Natural killer cell (primary cell): ENCODE measurements at regions of chr7 and their contacts with region 1.

Region 1: DNA sequence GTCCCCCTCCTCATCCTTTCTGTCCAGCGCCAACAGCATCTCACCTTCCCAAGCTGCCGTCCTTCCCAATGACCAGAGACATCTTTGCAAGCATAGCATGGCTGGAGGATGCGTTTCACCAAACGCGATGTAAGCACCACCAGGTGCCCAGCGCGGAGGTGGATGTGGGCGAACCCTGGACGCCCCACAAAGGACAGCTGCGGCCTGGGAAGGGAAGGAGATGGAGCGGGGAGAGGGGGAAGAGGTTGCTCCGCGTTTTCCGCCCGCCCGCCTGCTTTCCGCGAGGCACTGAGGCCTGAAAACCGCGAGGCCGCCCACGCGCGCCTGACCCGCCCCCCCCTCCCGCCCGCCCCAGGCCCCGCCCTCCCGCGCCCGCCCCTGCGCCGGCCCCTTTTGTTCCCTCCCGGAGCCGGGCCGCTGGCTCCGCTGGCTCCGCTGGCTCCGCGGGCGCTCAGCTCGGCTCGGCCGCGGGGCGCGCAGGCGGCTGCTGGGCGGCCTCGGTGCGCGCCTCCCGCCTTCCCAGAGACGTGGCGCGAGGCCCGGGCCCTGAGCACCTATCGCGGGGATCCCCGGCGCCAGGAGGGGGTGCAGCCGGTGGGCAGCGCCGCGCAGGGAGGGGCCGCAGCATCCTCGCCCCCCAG is at the start of gene CLIP2:
- DNase-seq: peak; percentile 62 to 86
- ATAC-seq: peak; percentile 80 to 86 (median 81)
- H3K4me3 ChIP-seq: peak within 1 kb of the TSS; percentile 32
- H3K4me3 Mint-ChIP-seq: peak within 1 kb of the TSS; percentile 90
- H3K27ac ChIP-seq: no peak within 1 kb of the TSS
- H3K27ac Mint-ChIP-seq: peak within 1 kb of the TSS; percentile 57 to 85
- H3K4me1 ChIP-seq: peaks cover 51% of the 10 kb centered on the region
- H3K4me1 Mint-ChIP-seq: peaks cover 34 to 44% of the 10 kb centered on the region in 2 donors
- H3K27me3 ChIP-seq: no peaks in the 10 kb centered on the region
- H3K27me3 Mint-ChIP-seq: peaks cover 0 to 3% of the 10 kb centered on the region in 2 donors
- CTCF ChIP-seq: no peak
- total RNA-seq, gene CLIP2: 8.5 to 14.7 (median 10.5) TPM

Region 2: DNA sequence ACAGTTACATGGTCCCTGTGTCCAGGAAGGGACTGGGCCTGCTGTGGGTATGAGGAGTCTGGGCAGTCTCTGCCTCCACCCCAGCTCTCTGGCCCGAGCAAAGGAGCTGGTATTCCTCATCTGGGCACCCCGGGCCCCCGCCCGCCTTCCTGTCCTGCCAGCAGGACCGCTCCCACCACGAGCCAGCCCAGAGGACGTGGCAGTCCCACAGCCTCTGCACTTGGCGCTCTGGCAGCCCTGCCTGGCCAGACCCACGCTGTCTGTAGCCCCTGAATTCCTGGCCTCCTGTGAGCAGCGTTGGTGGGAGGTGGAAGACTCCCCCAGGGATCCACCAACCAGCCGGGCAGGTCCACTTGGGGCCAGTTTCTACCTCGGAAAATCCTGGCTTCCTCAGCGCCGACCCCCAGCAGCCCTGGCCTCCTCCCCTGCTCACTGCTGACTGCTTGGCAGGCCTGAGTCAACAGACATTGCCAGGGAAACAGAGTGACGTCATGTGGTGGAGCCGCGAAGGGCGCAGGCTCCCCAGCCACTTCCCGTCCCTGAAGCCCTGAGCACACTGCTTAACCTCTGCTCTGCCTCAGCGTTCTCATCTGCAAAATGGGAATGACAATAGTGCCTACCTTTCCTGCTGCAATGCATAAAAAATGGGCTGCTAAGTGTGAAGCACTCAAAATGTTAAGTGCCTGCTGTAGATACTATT is 227.1 kb before region 1 on chr7:
- intact Hi-C with region 1: loop called (anchors 10 kb)
- DNase-seq: peak; percentile 84 to 86
- ATAC-seq: peak; percentile 95 to 99 (median 95)
- H3K4me3 ChIP-seq: peak overlapping the region; percentile 21
- H3K4me3 Mint-ChIP-seq: peak overlapping the region; percentile 86
- H3K27ac ChIP-seq: peak overlapping the region; percentile 91
- H3K27ac Mint-ChIP-seq: peak overlapping the region; percentile 99 to 100
- H3K4me1 ChIP-seq: peaks cover 21% of the 10 kb centered on the region
- H3K4me1 Mint-ChIP-seq: peaks cover 8 to 18% of the 10 kb centered on the region in 2 donors
- H3K27me3 ChIP-seq: no peaks in the 10 kb centered on the region
- H3K27me3 Mint-ChIP-seq: peaks cover 0 to 3% of the 10 kb centered on the region in 2 donors
- CTCF ChIP-seq: no peak

Region 3: DNA sequence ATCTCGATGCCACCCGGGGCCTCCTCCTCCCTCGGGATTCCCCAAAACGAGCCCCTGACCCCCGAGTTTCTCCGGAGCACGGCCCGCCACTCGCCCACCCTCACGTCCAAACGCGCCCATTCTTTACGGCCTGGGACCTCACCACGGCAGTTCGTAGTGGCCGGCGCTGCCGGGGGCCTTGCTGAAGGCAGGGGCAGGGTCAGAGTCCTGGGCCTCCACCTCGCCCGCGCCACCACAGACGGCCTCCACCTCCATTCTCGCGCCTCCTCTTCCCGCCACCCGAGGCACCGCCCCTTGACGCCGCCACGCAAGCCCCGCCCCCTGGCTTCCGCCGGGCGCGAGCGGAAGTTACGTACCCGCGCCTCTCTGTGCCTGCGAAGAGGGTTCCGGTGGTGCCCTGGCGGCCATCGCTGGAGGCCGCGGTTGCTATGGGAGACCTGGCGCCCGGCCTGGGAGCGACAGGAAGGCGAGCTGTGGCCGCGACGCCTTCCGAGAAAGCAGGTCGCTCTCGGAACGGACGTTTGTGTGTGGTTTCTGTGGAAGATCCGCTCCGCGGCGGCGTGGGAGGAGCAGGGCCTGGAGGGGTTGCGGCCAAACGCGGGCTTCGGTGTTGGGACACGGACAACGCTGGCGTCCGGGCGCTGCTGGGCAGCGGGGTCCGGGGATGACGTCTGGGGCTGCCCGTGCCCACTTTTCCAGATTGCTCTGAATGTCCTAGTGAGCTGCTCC is 34.8 kb before region 1 on chr7 and contains the start of gene RFC2:
- intact Hi-C with region 1: loop called (anchors 5 kb)
- DNase-seq: peak; percentile 98 to 99
- ATAC-seq: peak; percentile 92 to 98 (median 95)
- H3K4me3 ChIP-seq: peak within 1 kb of the TSS; percentile 97
- H3K4me3 Mint-ChIP-seq: peak within 1 kb of the TSS; percentile 95
- H3K27ac ChIP-seq: peak within 1 kb of the TSS; percentile 90
- H3K27ac Mint-ChIP-seq: peak within 1 kb of the TSS; percentile 93 to 98
- H3K4me1 ChIP-seq: peaks cover 24% of the 10 kb centered on the region
- H3K4me1 Mint-ChIP-seq: peaks cover 18% of the 10 kb centered on the region in 2 donors
- H3K27me3 ChIP-seq: no peaks in the 10 kb centered on the region
- H3K27me3 Mint-ChIP-seq: no peaks in the 10 kb centered on the region
- CTCF ChIP-seq: no peak
- total RNA-seq, gene RFC2: 16.9 to 26.5 (median 20.5) TPM

Region 4: DNA sequence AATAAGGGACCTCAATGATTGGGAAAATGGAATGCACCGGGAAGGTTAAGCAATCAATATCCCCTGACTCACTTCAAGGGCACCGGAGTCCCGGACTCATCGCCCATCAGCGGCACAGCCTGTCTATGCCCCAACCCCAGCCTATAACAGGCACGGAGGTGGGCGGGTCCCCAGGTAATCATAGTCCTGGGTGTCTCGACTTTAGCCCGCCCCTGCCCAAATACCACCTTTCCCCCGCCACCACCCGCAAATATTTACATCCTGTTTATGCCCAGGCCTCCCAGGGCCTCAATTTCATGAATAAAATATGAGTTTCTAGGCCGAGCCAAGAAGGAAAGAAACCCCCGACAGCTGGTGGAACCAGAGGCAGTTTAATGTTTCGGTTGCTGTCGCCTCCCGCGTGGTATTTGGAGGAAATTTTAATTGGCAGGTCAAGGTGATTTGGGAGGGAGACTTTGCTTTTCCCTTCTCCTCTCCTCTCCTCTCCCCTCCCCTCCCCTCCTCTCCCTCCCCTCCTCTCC is 19.3 kb before region 1 on chr7:
- intact Hi-C with region 1: loop called (anchors 1 kb)
- DNase-seq: peak; percentile 45 to 81
- ATAC-seq: peak; percentile 77 to 90 (median 85)
- H3K4me3 ChIP-seq: peak overlapping the region; percentile 51
- H3K4me3 Mint-ChIP-seq: peak overlapping the region; percentile 80
- H3K27ac ChIP-seq: no peak overlapping the region
- H3K27ac Mint-ChIP-seq: peak overlapping the region in 1 of 2 donors; percentile 69
- H3K4me1 ChIP-seq: peaks cover 27% of the 10 kb centered on the region
- H3K4me1 Mint-ChIP-seq: peaks cover 5 to 10% of the 10 kb centered on the region in 2 donors
- H3K27me3 ChIP-seq: no peaks in the 10 kb centered on the region
- H3K27me3 Mint-ChIP-seq: peaks cover 0 to 3% of the 10 kb centered on the region in 2 donors
- CTCF ChIP-seq: no peak